Panc1 (cell line): ENCODE measurements at regions of chr11 and their contacts with region 1.

Region 1: DNA sequence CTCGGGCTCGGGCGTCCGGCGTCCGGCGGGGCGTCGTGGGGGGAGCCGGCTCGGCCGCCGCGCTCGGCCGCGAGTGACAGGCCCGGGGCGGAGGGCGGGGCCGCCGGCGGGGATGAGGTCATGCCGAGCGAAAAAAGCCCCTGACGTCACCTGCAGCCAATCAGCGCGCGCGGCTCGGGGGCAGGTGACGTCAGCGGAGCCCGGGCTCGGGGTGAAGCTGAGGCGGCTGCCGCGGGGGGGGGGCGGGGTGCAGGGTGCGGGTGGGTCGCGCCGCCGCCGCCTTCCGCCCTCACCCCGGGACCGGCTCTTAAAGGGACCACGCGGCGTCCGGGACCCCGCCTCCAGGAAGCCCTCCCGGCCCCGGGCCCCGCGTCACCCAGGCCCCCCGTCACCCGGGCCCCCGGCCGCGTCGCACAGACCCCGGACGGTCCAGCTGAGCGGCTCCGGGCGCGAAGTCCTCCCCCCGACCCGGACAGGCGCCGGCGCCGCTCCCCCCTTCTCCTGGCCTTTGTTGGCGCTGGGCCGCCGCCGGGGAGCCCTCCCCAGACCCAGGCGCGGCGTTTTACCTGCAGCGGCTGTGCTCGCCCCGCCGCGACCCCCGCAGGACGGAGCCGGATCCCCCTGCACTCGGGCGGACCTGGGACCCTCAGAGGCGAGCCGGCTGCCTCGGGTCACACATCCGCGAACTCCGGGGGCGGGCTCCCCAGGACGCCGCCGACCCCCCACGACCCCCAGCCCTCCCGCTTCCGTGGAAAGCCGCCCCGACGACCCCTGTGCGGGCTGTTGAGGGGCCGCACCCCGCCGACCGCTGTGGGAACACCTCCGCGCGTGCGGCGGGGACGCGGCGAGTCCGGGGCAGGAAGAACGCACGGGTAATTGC is at the start of gene DUSP8:
- DNase-seq: no peak
- ATAC-seq: peak; percentile 65
- H3K4me3 ChIP-seq: peak within 1 kb of the TSS; percentile 41 to 59
- H3K27ac ChIP-seq: no peak within 1 kb of the TSS
- H3K4me1 ChIP-seq: peaks cover 21% of the 10 kb centered on the region
- H3K27me3 ChIP-seq: no peaks in the 10 kb centered on the region; the same call in 1 of the 2 replicates
- CTCF ChIP-seq: no peak
- total RNA-seq, gene DUSP8: 5.5 TPM

Region 2: GRCh38 chr11:1553808-1554594 is 18.4 kb before region 1 on chr11:
- CTCF ChIA-PET with region 1: interaction called, 11 read pairs
- POLR2A ChIA-PET with region 1: interaction called, 5 read pairs
- in situ Hi-C with region 1: no loop called
- intact Hi-C with region 1: no loop called
- DNase-seq: no peak
- ATAC-seq: peak; percentile 9; the same call in 1 of the 2 replicates
- H3K4me3 ChIP-seq: no peak overlapping the region
- H3K27ac ChIP-seq: no peak overlapping the region
- H3K4me1 ChIP-seq: peaks cover 8% of the 10 kb centered on the region
- H3K27me3 ChIP-seq: no peaks in the 10 kb centered on the region
- CTCF ChIP-seq: no peak

Region 3: DNA sequence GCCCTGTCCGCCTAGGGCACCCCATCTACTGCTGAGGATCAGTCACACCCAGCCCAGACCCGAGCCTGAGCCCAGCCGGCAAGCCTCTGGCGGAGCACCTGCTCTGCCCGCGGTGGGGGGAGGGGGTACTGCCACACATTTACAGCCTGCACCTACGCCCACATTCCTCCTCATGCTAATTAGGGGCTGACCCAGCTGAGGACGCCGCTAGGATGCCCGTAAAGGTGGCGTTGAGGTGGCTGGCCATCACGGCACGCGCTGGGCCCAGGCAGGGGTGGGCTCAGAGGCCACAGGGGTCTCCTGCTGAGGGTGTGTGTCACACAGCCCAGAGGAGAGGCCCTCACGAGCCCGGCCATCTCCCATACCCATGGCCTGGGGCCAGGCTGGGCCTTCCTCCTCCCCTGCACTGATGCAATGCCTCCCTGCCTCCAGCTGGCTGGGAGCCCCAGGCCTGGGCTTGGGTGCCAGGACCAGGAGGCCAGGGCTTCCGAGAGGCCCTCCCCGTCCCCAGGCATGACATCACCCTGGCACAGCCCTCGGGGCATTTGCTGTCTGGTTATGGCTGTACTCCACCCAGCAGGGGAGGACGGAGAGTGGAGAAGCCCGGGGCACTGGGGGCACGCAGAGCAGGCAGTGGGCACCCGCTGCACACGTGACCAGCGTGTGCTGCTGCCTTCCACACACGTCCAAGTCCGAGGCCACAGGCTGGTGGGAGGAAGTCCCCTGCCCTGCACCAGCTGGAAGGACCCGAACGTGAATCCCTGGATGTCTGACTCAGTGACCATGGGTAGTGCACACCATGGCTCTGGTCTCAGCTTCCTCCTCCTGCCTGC is 13.1 kb before region 1 on chr11:
- CTCF ChIA-PET with region 1: interaction called, 11 read pairs
- POLR2A ChIA-PET with region 1: no interaction called
- in situ Hi-C with region 1: no loop called
- intact Hi-C with region 1: no loop called
- DNase-seq: peak; percentile 50
- ATAC-seq: peak; percentile 55
- H3K4me3 ChIP-seq: 0 out of 4 replicates have a peak overlapping the region, but pooled peaks of 1 of the 2 experiments have one; percentile 4
- H3K27ac ChIP-seq: peak overlapping the region; percentile 1; the same call in 1 of the 2 replicates
- H3K4me1 ChIP-seq: peaks cover 17% of the 10 kb centered on the region
- H3K27me3 ChIP-seq: no peaks in the 10 kb centered on the region
- CTCF ChIP-seq: no peak

Region 4: GRCh38 chr11:1598816-1599215 is 26.4 kb after region 1 on chr11:
- CTCF ChIA-PET with region 1: interaction called, 15 read pairs
- POLR2A ChIA-PET with region 1: no interaction called
- in situ Hi-C with region 1: no loop called
- intact Hi-C with region 1: no loop called
- DNase-seq: no peak
- ATAC-seq: no peak
- H3K4me3 ChIP-seq: no peak overlapping the region
- H3K27ac ChIP-seq: no peak overlapping the region
- H3K4me1 ChIP-seq: no peaks in the 10 kb centered on the region
- H3K27me3 ChIP-seq: peaks cover 32% of the 10 kb centered on the region
- CTCF ChIP-seq: no peak

Region 5: DNA sequence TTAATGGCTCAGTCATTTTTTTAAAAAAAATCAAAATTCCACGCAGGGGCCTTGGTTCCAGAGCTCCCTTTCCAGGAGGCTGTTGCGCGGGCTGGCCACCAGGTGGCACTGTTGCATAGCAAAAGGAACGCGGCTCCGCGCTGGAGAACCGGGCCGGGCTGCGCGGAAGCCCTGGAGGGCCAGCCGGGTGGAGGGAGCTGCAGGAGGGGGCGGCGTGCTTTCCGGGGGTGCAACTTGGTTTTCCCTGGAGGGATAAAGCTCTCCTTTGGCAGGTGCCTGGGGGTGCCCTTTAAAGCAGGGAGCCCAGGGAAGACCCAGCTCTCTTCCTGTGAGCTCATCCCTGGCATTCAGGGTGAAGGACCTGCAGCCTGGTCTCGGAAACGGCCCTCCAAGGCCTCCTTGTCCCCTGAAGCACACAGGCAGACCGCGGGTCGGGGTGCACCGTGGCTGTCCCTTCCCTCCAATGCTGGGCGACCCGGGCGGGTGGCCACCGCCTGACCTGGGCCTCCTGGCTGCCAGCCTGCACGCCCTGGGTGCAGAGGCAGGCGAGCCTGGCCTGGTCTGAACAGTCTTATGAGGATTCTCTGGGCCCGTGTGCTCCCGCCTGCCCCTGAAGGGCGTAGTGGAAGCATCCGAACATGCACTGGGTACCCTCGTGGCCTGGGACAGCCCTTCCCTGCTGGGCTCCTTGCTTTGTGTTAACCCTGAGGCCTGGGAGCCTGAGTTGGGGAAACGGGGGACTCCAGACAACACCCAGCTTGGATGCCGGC is 80.5 kb after region 1 on chr11:
- CTCF ChIA-PET with region 1: no interaction called
- POLR2A ChIA-PET with region 1: no interaction called
- in situ Hi-C with region 1: no loop called
- intact Hi-C with region 1: no loop called
- DNase-seq: no peak
- ATAC-seq: peak; percentile 88
- H3K4me3 ChIP-seq: no peak overlapping the region
- H3K27ac ChIP-seq: no peak overlapping the region
- H3K4me1 ChIP-seq: 0 out of 2 replicates have a peak, but pooled peaks cover 2% of the 10 kb centered on the region
- H3K27me3 ChIP-seq: no peaks in the 10 kb centered on the region
- CTCF ChIP-seq: peak; percentile 99